WTC11 (cell line): ENCODE measurements at regions of chr2 and their contacts with region 1.

Region 1: DNA sequence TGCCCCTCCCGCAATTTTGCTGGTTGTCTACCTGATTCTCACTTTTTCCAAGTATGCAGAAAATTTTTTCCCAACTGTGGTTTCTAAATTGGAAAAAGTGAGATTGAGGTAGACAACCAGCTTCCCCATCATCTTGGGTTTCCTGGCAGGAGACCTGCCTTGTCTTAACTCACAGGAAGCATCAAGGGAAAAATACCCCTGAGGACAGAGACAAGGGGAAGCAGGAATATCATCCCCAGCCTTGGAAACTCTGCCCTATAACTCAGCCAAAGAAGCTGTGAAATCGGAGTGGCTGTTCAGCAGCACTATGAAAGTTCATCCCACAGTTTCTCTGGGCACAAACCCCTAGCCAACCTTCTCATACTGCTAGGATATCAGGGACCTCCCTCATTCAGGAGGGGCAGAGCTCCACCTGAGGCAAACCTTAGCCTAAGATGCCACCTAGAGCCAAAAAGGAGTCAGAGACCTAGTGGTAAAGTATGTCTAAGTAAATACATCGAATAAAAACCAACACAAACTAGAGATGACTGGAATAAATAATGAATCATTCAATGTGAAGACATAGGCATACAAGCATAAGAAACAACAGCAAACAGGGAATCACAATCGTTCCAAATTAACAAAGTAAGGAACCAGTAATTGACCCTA is 68.1 kb downstream of the ZSWIM2 start:
- DNase-seq: peak; percentile 42
- ATAC-seq: peak; percentile 100
- H3K4me3 Mint-ChIP-seq: no peak overlapping the region
- H3K27ac Mint-ChIP-seq: peak overlapping the region; percentile 28; the same call in 1 of the 2 replicates
- H3K4me1 Mint-ChIP-seq: peaks cover 7% of the 10 kb centered on the region
- H3K27me3 Mint-ChIP-seq: no peaks in the 10 kb centered on the region
- CTCF ChIP-seq: 0 out of 2 replicates have a peak, but pooled peaks have one; percentile 25

Region 2: DNA sequence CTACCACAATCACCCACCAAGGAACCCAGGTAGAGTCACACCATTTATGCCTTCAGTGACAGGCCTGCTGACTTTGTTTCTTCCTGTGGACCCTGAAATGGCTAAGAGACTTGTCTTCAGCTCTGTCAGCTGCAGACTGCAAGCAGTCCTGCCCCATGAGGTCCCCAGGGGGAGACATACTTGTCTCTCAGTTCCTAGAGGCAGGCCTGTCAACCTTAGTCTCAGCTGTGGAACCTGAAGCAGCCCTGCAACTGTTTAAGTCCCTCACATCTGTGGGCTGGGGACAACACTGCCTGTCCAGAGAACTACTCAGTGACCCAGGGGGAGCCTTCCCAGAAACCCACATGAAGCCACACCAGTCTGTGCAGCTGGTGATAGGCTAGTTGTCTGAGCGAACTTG is 11.5 kb before region 1 on chr2:
- CTCF ChIA-PET with region 1: interaction called, 11 read pairs
- POLR2A ChIA-PET with region 1: no interaction called
- DNase-seq: no peak
- ATAC-seq: peak; percentile 25; the same call in 1 of the 2 replicates
- H3K4me3 Mint-ChIP-seq: no peak overlapping the region
- H3K27ac Mint-ChIP-seq: no peak overlapping the region
- H3K4me1 Mint-ChIP-seq: peaks cover 19% of the 10 kb centered on the region
- H3K27me3 Mint-ChIP-seq: peaks cover 4% of the 10 kb centered on the region; the same call in 1 of the 2 replicates
- CTCF ChIP-seq: no peak

Region 3: DNA sequence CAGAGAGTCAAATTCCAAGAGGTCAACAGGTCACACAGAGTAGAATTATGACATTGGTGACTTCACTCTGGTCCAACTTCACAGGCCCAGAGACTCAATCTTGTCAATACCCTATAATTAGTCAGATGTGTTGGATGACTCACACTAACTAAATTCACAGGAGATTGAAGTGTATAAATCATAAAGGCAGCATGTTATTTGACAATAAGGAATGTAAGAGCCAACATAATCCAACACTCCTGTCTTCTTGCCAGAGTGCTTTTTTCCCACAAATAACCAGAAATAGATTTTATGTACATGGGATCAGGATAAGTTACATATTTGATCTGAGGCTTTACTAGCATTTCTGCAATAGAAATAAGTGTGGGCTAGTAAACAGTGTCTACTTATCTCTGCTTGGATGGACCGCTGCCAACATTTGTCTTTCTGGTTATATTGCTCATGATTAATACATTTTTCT is 110.4 kb after region 1 on chr2:
- CTCF ChIA-PET with region 1: no interaction called
- POLR2A ChIA-PET with region 1: no interaction called
- DNase-seq: no peak
- ATAC-seq: no peak
- H3K4me3 Mint-ChIP-seq: no peak overlapping the region
- H3K27ac Mint-ChIP-seq: no peak overlapping the region
- H3K4me1 Mint-ChIP-seq: 0 out of 2 replicates have a peak, but pooled peaks cover 7% of the 10 kb centered on the region
- H3K27me3 Mint-ChIP-seq: no peaks in the 10 kb centered on the region
- CTCF ChIP-seq: no peak

Region 4: GRCh38 chr2:187155476-187155875 is 374.7 kb after region 1 on chr2:
- CTCF ChIA-PET with region 1: no interaction called
- POLR2A ChIA-PET with region 1: no interaction called
- DNase-seq: no peak
- ATAC-seq: no peak
- H3K4me3 Mint-ChIP-seq: no peak overlapping the region
- H3K27ac Mint-ChIP-seq: no peak overlapping the region
- H3K4me1 Mint-ChIP-seq: no peaks in the 10 kb centered on the region
- H3K27me3 Mint-ChIP-seq: no peaks in the 10 kb centered on the region
- CTCF ChIP-seq: no peak